Natural killer cell (primary cell): ENCODE measurements at regions of chr22 and their contacts with region 1.

Region 1: DNA sequence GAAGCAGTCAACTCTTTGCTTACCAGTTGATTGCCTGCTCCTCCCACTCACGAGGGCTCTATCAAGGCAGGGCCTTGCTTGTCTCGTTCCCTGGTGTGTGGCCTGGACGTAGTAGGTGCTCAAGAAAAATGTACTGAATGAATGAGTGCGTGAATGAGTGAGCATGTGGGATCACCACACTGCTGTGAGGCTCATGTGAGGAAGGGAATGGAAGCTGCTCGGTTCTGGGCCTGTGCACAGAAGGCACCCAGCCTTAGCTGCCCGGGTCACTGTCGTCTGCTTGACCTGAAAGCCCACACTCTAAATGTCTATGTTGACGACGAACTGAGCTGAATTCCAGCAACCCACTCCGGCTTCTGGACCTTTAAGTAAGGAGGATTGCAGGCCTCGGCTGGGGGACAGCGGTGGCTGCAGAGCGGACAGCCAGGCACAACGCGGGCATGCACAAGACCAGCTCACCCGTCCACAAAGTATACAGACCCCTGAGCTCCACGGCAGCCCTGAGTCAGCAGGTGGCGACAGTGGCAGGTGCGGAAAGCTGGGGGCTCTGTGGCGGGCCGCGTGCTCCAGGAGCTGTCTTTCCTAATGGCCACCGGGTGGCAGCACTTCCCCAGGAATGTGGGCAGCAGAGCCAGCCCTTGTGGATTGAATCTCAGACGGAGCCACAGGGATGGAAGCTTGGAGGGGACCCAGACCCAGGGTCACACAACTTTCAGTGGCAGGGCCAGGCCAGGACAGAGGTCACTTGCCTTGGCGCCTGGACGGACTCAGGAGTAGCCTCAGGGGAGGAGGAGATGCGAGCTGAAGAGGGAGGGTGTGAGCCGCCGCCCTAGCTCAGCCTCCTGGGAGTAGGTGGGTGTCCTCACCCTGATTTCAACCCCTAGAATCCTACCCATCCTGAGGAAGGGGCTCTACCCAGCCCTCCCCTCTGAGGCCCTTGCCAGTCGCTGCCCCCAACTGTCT is 5.0 kb upstream of the PICK1 start:
- DNase-seq: peak; percentile 78 to 91
- ATAC-seq: peak; percentile 87
- H3K4me3 ChIP-seq: no peak overlapping the region
- H3K4me3 Mint-ChIP-seq: peak overlapping the region; percentile 25
- H3K27ac ChIP-seq: no peak overlapping the region
- H3K27ac Mint-ChIP-seq: peak overlapping the region in 1 of 2 donors; percentile 40
- H3K4me1 ChIP-seq: peaks cover 23% of the 10 kb centered on the region
- H3K4me1 Mint-ChIP-seq: peaks cover 13 to 18% of the 10 kb centered on the region in 2 donors
- H3K27me3 ChIP-seq: no peaks in the 10 kb centered on the region
- H3K27me3 Mint-ChIP-seq: peaks cover 0 to 2% of the 10 kb centered on the region in 2 donors
- CTCF ChIP-seq: peak; percentile 91

Region 2: DNA sequence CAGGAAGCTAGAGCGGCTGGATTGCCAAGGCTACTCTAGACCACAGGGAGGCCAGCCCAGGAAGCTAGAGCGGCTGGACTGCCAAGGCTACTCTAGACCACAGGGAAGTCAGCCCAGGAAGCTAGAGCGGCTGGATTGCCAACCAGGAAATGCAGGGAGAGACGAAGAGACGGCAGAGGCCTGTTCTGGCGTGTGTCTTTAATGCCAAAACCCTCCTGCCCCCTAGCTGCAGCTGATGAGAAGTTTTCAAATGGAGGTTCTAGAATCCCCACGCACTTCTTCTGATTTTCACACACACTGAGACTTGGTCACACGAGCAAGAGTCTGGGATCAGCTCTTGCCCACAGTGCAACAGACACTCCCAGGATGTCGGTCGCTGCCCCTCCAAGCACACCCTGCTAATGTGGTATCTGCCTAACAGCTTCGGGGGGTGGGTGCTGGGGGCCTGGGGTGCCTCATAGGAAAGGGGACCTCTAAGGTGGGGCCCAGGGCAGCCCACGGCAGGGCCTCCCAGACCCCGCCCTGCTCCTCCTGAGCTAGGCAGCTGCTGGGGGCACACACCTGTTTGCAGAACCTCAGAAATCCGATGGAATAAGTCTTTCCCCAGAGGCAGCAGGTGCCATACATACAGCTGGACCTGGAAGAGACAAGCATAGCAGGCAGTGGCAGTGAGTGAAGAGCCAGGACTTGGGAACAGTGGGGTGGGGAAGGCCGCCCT is 178.1 kb after region 1 on chr22:
- intact Hi-C with region 1: loop called (anchors 1 kb)
- DNase-seq: peak; percentile 60 to 71
- ATAC-seq: peak; percentile 83 to 86 (median 86)
- H3K4me3 ChIP-seq: no peak overlapping the region
- H3K4me3 Mint-ChIP-seq: peak overlapping the region; percentile 17
- H3K27ac ChIP-seq: peak overlapping the region; percentile 76
- H3K27ac Mint-ChIP-seq: peak overlapping the region; percentile 90 to 92
- H3K4me1 ChIP-seq: peaks cover 35% of the 10 kb centered on the region
- H3K4me1 Mint-ChIP-seq: peaks cover 20 to 35% of the 10 kb centered on the region in 2 donors
- H3K27me3 ChIP-seq: no peaks in the 10 kb centered on the region
- H3K27me3 Mint-ChIP-seq: no peaks in the 10 kb centered on the region
- CTCF ChIP-seq: peak; percentile 60

Region 3: DNA sequence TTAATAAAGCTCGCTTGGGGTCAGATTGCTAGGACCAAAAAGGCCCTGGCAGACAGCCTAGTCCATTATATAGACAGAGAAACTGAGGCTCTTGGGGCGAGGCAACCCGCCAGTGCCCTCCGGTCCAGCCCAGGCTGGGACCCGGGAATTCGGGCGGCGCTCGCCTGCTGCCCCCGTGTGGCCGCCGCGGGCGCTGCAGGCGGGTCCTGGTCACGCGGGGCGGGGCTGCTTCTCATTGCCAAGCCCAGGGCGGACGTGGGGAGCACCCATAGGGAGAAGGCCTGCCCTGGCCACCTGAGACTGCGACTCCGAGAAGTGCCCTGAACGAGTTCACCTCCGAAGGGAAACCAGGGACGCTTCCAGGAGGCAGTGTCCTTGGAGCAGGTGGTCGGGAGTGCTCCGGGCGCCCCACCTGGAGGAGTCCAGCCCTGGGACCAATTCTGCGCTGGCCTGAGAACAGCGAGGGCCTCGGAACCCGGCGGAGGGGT is 301.0 kb after region 1 on chr22:
- intact Hi-C with region 1: loop called (anchors 1 kb)
- DNase-seq: peak; percentile 77 to 79
- ATAC-seq: peak; percentile 89 to 99 (median 95)
- H3K4me3 ChIP-seq: no peak overlapping the region
- H3K4me3 Mint-ChIP-seq: no peak overlapping the region
- H3K27ac ChIP-seq: no peak overlapping the region
- H3K27ac Mint-ChIP-seq: no peak overlapping the region
- H3K4me1 ChIP-seq: peaks cover 6% of the 10 kb centered on the region
- H3K4me1 Mint-ChIP-seq: no peaks in the 10 kb centered on the region
- H3K27me3 ChIP-seq: no peaks in the 10 kb centered on the region
- H3K27me3 Mint-ChIP-seq: no peaks in the 10 kb centered on the region
- CTCF ChIP-seq: peak; percentile 95

Region 4: GRCh38 chr22:38569972-38570778 is 518.0 kb after region 1 on chr22 and contains the start of gene DMC1:
- intact Hi-C with region 1: loop called (anchors 1 kb)
- DNase-seq: peak; percentile 80 to 98
- ATAC-seq: peak; percentile 96 to 99 (median 97)
- H3K4me3 ChIP-seq: peak within 1 kb of the TSS; percentile 68
- H3K4me3 Mint-ChIP-seq: peak within 1 kb of the TSS; percentile 90
- H3K27ac ChIP-seq: peak within 1 kb of the TSS; percentile 36
- H3K27ac Mint-ChIP-seq: peak within 1 kb of the TSS; percentile 52 to 86
- H3K4me1 ChIP-seq: peaks cover 17% of the 10 kb centered on the region
- H3K4me1 Mint-ChIP-seq: peaks cover 12 to 19% of the 10 kb centered on the region in 2 donors
- H3K27me3 ChIP-seq: no peaks in the 10 kb centered on the region
- H3K27me3 Mint-ChIP-seq: no peaks in the 10 kb centered on the region
- CTCF ChIP-seq: no peak
- total RNA-seq, gene DMC1: 0.31 to 1.7 (median 0.63) TPM

Region 5: DNA sequence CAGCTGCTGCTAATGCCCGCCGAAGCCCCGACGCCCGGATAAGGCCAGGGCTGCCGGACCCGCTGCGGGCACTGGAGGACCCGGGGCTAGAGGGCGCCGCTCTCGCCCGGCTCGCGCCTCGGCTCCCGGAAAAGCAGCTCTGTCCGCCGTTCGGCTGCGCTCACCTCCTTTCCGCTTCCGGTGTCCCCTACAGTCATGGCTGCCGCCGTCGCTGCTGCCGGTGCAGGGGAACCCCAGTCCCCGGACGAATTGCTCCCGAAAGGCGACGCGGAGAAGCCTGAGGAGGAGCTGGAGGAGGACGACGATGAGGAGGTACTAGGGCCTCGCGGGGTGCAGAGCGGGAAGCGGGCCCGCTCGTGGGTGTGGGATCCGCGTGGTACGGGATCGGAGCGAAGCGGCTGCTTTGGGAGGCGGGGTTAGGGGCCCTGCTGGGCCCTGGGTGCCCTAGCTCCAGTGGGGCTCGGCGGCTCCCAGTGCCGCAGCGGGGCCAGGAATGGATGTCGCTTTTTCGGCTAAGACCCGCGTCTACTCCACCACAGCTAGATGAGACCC is 629.7 kb after region 1 on chr22 and contains the start of gene TOMM22:
- intact Hi-C with region 1: loop called (anchors 5 kb)
- DNase-seq: peak; percentile 79 to 91
- ATAC-seq: peak; percentile 95 to 99 (median 97)
- H3K4me3 ChIP-seq: peak within 1 kb of the TSS; percentile 91
- H3K4me3 Mint-ChIP-seq: peak within 1 kb of the TSS; percentile 97
- H3K27ac ChIP-seq: peak within 1 kb of the TSS; percentile 76
- H3K27ac Mint-ChIP-seq: peak within 1 kb of the TSS; percentile 88 to 99
- H3K4me1 ChIP-seq: peaks cover 14% of the 10 kb centered on the region
- H3K4me1 Mint-ChIP-seq: peaks cover 15 to 16% of the 10 kb centered on the region in 2 donors
- H3K27me3 ChIP-seq: no peaks in the 10 kb centered on the region
- H3K27me3 Mint-ChIP-seq: no peaks in the 10 kb centered on the region
- CTCF ChIP-seq: peak; percentile 46
- total RNA-seq, gene TOMM22: 45.9 to 50.6 (median 47.5) TPM